Thyroid gland (tissue), 4 donors: ENCODE measurements at regions of chr7 and their contacts with region 1.

Region 1: GRCh38 chr7:133252858-133253518 is at the start of gene EXOC4:
- DNase-seq: peak; percentile 91
- H3K4me3 ChIP-seq: peak within 1 kb of the TSS; percentile 47 to 70 (median 63)
- H3K27ac ChIP-seq: peak within 1 kb of the TSS in 2 of 3 donors; percentile 69 to 86
- H3K4me1 ChIP-seq: peaks cover 6 to 9% of the 10 kb centered on the region in 2 donors
- H3K27me3 ChIP-seq: no peaks in the 10 kb centered on the region
- CTCF ChIP-seq: no peak
- POLR2A ChIP-seq: peak in 1 of 2 donors; percentile 65
- total RNA-seq, gene EXOC4: 74.0 to 116 (median 107) TPM

Region 2: GRCh38 chr7:133081599-133082389 is 171.2 kb before region 1 on chr7 and contains the start of gene CHCHD3:
- intact Hi-C with region 1: loop called (anchors 5 kb)
- DNase-seq: peak; percentile 99
- H3K4me3 ChIP-seq: peak within 1 kb of the TSS; percentile 64 to 76 (median 68)
- H3K27ac ChIP-seq: peak within 1 kb of the TSS in 2 of 3 donors; percentile 38 to 70
- H3K4me1 ChIP-seq: peaks cover 11 to 23% of the 10 kb centered on the region in 2 donors
- H3K27me3 ChIP-seq: no peaks in the 10 kb centered on the region
- CTCF ChIP-seq: no peak
- POLR2A ChIP-seq: peak in 1 of 2 donors; percentile 70
- total RNA-seq, gene CHCHD3: 66.0 to 79.1 (median 70.0) TPM

Region 3: GRCh38 chr7:133364959-133365690 is 112.1 kb after region 1 on chr7:
- intact Hi-C with region 1: no loop called
- DNase-seq: no peak
- H3K4me3 ChIP-seq: no peak overlapping the region
- H3K27ac ChIP-seq: peak overlapping the region in 2 of 3 donors; percentile 11 to 54
- H3K4me1 ChIP-seq: peaks cover 19 to 20% of the 10 kb centered on the region in 2 donors
- H3K27me3 ChIP-seq: no peaks in the 10 kb centered on the region
- CTCF ChIP-seq: peak in 1 of 6 experiments; percentile 18
- POLR2A ChIP-seq: no peak